Transverse colon (tissue), 4 donors: ENCODE measurements at regions of chr3 and their contacts with region 1.

Region 1: DNA sequence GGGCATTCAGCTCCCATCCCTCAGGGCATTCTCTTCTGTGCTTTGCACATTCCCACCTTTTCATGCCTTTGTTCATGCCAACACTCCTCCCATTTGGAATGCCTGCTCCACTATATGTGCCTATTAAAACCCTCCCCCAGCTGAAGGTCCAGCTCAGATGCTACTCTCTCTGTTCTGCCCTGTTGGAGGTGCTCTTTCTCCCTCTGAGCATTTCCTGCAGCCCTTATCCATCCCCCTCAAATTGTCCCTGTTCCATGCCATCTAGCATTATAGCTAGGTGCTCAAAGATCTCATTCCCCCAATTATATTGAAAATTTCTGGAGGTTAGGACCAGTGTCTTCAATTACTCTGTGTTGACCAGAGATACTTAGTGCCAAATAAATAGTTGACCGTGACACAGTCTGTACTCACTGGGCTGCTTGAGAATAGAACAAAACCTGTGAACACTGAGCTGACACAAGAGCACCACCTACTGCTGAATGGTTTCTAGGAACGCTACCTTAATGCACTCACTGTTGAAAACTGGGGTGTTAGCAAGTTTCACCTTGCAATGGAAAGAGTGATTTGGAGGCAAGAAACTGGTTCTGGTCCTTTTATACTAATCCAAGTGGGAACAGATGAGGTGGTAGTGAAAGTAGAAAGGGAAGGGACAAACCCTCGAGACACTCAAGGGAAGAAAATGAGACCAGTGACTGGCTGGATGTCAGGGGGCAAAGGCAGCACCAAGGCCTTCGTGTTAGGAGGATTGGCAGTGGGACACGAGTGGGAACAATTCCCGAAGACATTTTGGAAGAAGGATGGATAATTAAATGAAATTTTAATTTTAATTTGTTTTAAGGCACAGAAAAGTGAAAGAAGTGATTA is 289.8 kb upstream of the ROPN1 start:
- DNase-seq: peak; percentile 25
- H3K4me3 ChIP-seq: no peak overlapping the region
- H3K27ac ChIP-seq: no peak overlapping the region
- H3K4me1 ChIP-seq: peaks cover 0 to 17% (median 7%) of the 10 kb centered on the region in 4 donors
- H3K27me3 ChIP-seq: no peaks in the 10 kb centered on the region
- CTCF ChIP-seq: peak; percentile 36 to 52 (median 43)
- EP300 ChIP-seq: no peak
- POLR2A ChIP-seq: no peak

Region 2: DNA sequence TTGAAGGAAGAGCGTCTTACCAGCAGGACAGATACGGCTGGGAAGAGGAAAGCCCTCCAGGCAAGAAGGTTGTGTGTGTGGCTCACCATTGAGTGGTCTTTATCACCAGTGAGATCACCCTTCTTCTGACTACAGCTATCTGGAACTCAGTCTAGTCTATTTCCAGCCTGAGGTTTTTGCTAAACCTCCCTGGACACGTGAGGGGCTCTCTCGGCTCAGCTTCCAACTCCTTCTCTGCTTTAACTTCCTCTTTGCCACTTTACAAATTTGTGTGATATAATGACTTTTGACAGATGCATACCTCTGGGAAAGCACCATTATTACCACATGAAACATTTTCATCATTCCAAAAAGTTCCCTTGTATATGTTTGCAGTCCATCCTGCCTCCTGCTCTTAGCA is 274.5 kb before region 1 on chr3:
- in situ Hi-C with region 1: loop called in 1 of 4 experiments (anchors 25 kb)
- intact Hi-C with region 1: no loop called
- DNase-seq: no peak
- H3K4me3 ChIP-seq: no peak overlapping the region
- H3K27ac ChIP-seq: no peak overlapping the region
- H3K4me1 ChIP-seq: peaks cover 0 to 3% (median 0%) of the 10 kb centered on the region in 4 donors
- H3K27me3 ChIP-seq: no peaks in the 10 kb centered on the region
- CTCF ChIP-seq: no peak
- EP300 ChIP-seq: no peak
- POLR2A ChIP-seq: no peak

Region 3: DNA sequence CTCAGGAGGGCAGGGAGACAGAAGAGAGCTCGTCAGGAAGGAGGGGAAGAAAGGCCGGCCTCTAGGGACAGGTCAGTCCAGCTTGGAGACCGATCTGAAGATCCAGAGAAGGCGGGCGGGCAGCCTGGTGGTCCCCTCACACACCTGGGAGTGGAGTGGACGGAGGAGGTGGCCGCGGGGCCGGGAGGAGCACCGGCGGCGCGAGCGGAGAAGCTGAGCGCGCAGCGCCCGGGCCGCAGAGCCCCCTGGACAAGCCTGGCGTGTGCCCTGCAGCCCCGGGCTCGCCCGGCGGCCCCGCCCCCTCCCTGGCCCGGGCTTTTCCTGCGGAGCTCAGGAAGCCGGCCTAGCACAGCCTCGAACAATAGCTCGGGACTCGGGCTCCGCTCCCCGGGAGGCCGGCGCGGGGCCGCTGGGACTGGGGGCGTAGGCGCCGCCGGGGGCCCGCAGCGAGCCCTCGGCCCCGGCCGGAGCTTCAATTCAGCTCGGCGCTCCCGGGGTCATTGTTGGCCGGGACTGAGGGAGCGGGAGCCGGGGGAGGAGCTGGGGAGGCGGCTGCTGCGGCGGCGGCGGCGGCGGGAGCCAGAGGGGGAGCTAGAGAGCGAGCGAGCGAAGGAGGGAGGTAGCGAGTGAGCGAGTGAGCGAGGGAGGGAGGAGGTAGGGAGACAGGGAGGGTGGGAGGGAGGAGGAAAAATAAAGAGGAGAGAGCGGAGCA is 248.9 kb before region 1 on chr3:
- in situ Hi-C with region 1: loop called in 1 of 4 experiments (anchors 25 kb)
- intact Hi-C with region 1: no loop called
- DNase-seq: peak; percentile 90
- H3K4me3 ChIP-seq: peak overlapping the region; percentile 66 to 86 (median 76)
- H3K27ac ChIP-seq: peak overlapping the region; percentile 82 to 88 (median 84)
- H3K4me1 ChIP-seq: peaks cover 0 to 22% (median 12%) of the 10 kb centered on the region in 4 donors
- H3K27me3 ChIP-seq: peaks cover 32% of the 10 kb centered on the region
- CTCF ChIP-seq: peak; percentile 25 to 89 (median 75)
- EP300 ChIP-seq: no peak
- POLR2A ChIP-seq: no peak